RWPE1 (cell line): ENCODE measurements at regions of chr1 and their contacts with region 1.

Region 1: GRCh38 chr1:39003794-39004193 is 12.7 kb downstream of the AKIRIN1 start:
- DNase-seq: no peak
- H3K27ac ChIP-seq: no peak overlapping the region
- CTCF ChIP-seq: no peak

Region 2: DNA sequence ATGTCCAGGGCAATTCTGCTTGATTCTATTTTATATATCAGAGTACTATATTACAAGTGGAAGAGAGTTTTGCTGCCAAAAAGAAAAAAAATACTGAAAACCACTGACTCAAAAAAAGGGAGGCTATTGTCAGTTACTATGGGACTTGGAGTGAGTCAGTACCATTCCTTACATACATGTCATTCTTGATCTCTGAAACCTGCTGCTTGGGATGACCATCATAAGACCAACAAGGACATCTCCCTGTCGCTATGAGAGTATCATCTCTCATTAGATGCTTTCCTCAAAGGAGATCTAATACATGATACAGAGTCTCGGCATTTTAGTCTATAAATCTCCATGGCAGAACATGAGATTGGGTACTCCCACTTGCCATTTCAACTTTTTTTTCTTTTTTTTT is 1045.1 kb before region 1 on chr1:
- CTCF ChIA-PET with region 1: interaction called, 10 read pairs
- POLR2A ChIA-PET with region 1: no interaction called
- DNase-seq: no peak
- H3K27ac ChIP-seq: no peak overlapping the region
- CTCF ChIP-seq: no peak